Heart left ventricle (tissue), 16 donors: ENCODE measurements at regions of chr14 and their contacts with region 1.

Region 1: GRCh38 chr14:77151918-77152588 is 10.5 kb upstream of the ZDHHC22 start:
- DNase-seq: no peak
- ATAC-seq: peak in 1 of 4 donors; percentile 27
- H3K4me3 ChIP-seq: no peak overlapping the region
- H3K27ac ChIP-seq: no peak overlapping the region
- H3K4me1 ChIP-seq: peaks cover 0 to 19% (median 0%) of the 10 kb centered on the region in 12 donors
- H3K27me3 ChIP-seq: peaks cover 0 to 18% (median 8%) of the 10 kb centered on the region in 9 donors
- CTCF ChIP-seq: peak in 6 of 12 donors; percentile 13 to 35 (median 22)
- POLR2A ChIP-seq: no peak

Region 2: DNA sequence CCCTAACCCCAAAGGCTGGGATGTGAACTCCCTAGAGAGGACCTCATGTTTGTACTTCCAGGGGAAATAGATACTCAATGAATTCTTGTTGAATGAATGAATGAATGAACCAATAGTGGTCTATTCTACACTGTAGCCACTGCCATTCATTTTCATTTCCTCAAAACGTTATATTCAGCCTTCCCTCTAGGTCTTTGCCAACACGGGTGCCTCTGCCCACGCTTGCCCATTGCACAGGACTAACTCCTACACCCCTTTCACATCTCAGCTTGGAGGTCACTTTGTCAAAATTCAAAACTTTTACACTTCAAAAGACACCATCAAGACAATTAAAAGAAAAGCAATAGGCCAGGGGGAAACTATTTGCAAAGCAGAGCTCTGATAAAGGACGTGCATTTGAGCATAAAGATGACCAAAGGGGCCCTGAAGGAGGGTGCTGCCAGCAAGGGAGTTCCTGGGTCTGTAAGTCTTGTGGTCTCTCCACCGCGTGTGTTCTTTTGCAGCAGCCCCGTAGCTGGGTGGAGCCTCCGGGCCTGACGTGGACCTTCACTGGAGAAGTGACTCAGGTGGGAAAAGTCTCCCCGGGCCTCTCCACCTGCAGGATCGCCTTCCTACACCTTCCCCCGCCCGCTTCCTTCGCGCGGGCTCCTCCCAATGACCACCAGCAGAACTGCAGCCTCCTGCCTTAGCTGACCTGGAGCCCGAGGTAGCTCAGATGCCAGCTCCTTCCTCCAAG is 61.1 kb after region 1 on chr14:
- intact Hi-C with region 1: loop called in 1 of 10 experiments (anchors 5 kb)
- DNase-seq: no peak
- ATAC-seq: peak in 2 of 4 donors; percentile 55 to 72
- H3K4me3 ChIP-seq: no peak overlapping the region
- H3K27ac ChIP-seq: no peak overlapping the region
- H3K4me1 ChIP-seq: no peaks in the 10 kb centered on the region
- H3K27me3 ChIP-seq: peaks cover 0 to 19% (median 3%) of the 10 kb centered on the region in 9 donors
- CTCF ChIP-seq: peak; percentile 19 to 58 (median 34)
- POLR2A ChIP-seq: no peak

Region 3: DNA sequence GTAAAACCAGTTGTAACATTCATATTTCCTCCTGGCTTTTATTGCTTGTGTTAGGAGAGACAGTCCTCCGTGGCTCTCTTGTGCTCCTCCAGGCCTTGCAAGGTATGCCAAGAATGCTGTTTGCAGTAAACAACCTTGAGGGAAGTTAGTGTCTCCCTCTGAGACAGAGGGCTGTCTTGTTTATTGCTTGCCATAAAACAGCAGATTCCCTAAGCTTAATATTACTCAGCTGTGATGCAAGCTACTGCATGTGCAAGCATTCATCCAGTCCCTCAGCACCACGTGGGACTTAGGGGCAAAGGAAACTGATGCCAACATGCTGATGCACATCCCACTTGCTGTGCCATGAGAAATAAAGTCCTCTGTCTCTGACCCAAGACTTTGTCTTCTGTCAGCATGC is 162.0 kb after region 1 on chr14:
- intact Hi-C with region 1: loop called (anchors 2 to 10 kb)
- DNase-seq: no peak
- ATAC-seq: no peak
- H3K4me3 ChIP-seq: no peak overlapping the region
- H3K27ac ChIP-seq: peak overlapping the region in 1 of 12 donors; percentile 60
- H3K4me1 ChIP-seq: peaks cover 0 to 42% (median 15%) of the 10 kb centered on the region in 12 donors
- H3K27me3 ChIP-seq: no peaks in the 10 kb centered on the region
- CTCF ChIP-seq: no peak
- POLR2A ChIP-seq: no peak

Region 4: GRCh38 chr14:77542421-77543239 is 390.6 kb after region 1 on chr14:
- intact Hi-C with region 1: loop called in 3 of 10 experiments (anchors 10 kb)
- DNase-seq: no peak
- ATAC-seq: peak in 2 of 4 donors; percentile 59 to 76
- H3K4me3 ChIP-seq: no peak overlapping the region
- H3K27ac ChIP-seq: peak overlapping the region in 8 of 12 donors; percentile 27 to 73 (median 36)
- H3K4me1 ChIP-seq: peaks cover 0 to 37% (median 5%) of the 10 kb centered on the region in 12 donors
- H3K27me3 ChIP-seq: no peaks in the 10 kb centered on the region
- CTCF ChIP-seq: no peak
- POLR2A ChIP-seq: no peak